ENCODE measurements at regions of chr2 and their contacts with region 1.

Region 1: DNA sequence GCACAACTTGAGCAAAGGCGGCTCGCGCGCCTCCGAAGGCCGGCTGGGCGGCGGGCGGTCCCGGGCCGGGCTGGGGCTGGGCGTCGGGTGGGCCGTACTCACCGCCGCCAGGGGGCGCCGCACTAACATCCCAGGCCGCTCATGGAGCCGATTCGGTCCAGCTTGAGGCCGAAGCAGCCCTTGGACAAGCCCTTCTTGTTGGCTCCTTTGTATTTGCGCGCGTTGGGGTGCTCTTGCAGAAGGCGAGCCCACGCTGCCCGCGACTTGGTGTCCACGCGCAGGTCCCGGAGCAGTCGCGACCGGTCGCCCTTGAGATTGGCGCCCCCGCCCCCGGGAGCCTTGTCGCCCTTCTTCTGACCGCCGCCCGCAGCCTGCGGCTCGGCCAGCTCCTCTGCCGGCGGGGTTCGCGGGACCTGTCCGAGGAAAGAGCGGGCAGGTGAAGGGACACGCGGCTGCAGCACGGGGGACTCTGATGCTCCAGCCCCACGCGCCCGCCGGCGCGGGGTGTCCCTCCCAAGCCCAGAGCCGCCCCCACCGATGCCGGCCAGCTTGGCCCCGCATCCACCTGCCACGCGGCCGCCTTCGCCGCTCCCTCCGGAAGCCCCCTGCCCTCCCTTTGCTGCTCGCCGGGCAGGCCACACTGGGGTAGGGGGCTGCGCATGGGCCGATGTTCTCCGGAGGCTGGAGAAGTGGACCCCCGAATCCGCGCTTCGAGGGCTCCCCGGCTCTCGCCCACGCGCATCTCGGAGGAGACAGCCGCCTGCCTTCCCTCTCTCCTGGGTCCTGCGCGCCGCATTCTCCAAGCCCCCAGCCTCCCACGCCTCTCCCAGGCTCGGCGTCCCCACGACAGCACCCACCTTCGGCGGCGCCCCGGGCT is 655 bp downstream of the NPPC start:
- DNase-seq: peak; percentile 82 to 91 (median 85)
- ATAC-seq: peak; percentile 75 to 90 (median 84)
- H3K4me3 ChIP-seq: peak overlapping the region; percentile 26 to 59 (median 50)
- H3K27ac ChIP-seq: peak overlapping the region in 1 of 12 donors; percentile 15
- H3K4me1 ChIP-seq: peaks cover 4 to 40% (median 20%) of the 10 kb centered on the region in 12 donors
- H3K27me3 ChIP-seq: peaks cover 9 to 79% (median 39%) of the 10 kb centered on the region in 9 donors
- CTCF ChIP-seq: peak; percentile 81 to 98 (median 91)
- POLR2A ChIP-seq: no peak

Region 2: GRCh38 chr2:231987124-231987727 is 61.7 kb after region 1 on chr2:
- intact Hi-C with region 1: loop called in 1 of 10 experiments (anchors 5 kb)
- DNase-seq: peak in 3 of 5 donors; percentile 23 to 32 (median 25)
- ATAC-seq: peak in 3 of 4 donors; percentile 20 to 80 (median 76)
- H3K4me3 ChIP-seq: no peak overlapping the region
- H3K27ac ChIP-seq: peak overlapping the region in 2 of 12 donors; percentile 12 to 21
- H3K4me1 ChIP-seq: peaks cover 0 to 28% (median 12%) of the 10 kb centered on the region in 12 donors
- H3K27me3 ChIP-seq: no peaks in the 10 kb centered on the region
- CTCF ChIP-seq: no peak
- POLR2A ChIP-seq: no peak

Region 3: DNA sequence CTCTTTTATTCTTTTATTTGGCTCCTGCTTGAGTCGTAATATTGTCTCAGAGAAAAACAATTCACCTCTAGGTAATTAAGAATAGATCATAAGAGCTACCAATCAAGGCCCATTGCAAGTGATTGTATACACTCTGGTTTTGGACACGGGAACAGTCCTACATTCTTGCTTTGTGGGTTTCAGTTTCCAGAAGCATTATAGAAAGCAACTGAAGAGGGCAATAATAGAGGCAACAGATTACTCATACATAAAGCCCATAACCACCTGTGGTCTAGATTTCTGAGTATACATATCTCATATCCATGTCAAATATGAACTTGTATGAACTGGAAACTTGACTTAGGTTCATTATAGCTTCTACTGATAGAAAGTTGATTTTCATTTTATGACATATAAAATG is 101.4 kb after region 1 on chr2:
- intact Hi-C with region 1: loop called in 1 of 10 experiments (anchors 5 kb)
- DNase-seq: no peak
- ATAC-seq: no peak
- H3K4me3 ChIP-seq: no peak overlapping the region
- H3K27ac ChIP-seq: no peak overlapping the region
- H3K4me1 ChIP-seq: peaks cover 0 to 24% (median 11%) of the 10 kb centered on the region in 12 donors
- H3K27me3 ChIP-seq: no peaks in the 10 kb centered on the region
- CTCF ChIP-seq: no peak
- POLR2A ChIP-seq: no peak

Region 4: GRCh38 chr2:232142049-232142448 is 216.5 kb after region 1 on chr2:
- intact Hi-C with region 1: loop called (anchors 1 to 5 kb)
- DNase-seq: peak in 4 of 5 donors; percentile 17 to 38 (median 28)
- ATAC-seq: peak in 3 of 4 donors; percentile 48 to 65 (median 53)
- H3K4me3 ChIP-seq: no peak overlapping the region
- H3K27ac ChIP-seq: no peak overlapping the region
- H3K4me1 ChIP-seq: peaks cover 0 to 14% (median 2%) of the 10 kb centered on the region in 12 donors
- H3K27me3 ChIP-seq: no peaks in the 10 kb centered on the region
- CTCF ChIP-seq: peak; percentile 36 to 75 (median 68)
- POLR2A ChIP-seq: no peak

Region 5: DNA sequence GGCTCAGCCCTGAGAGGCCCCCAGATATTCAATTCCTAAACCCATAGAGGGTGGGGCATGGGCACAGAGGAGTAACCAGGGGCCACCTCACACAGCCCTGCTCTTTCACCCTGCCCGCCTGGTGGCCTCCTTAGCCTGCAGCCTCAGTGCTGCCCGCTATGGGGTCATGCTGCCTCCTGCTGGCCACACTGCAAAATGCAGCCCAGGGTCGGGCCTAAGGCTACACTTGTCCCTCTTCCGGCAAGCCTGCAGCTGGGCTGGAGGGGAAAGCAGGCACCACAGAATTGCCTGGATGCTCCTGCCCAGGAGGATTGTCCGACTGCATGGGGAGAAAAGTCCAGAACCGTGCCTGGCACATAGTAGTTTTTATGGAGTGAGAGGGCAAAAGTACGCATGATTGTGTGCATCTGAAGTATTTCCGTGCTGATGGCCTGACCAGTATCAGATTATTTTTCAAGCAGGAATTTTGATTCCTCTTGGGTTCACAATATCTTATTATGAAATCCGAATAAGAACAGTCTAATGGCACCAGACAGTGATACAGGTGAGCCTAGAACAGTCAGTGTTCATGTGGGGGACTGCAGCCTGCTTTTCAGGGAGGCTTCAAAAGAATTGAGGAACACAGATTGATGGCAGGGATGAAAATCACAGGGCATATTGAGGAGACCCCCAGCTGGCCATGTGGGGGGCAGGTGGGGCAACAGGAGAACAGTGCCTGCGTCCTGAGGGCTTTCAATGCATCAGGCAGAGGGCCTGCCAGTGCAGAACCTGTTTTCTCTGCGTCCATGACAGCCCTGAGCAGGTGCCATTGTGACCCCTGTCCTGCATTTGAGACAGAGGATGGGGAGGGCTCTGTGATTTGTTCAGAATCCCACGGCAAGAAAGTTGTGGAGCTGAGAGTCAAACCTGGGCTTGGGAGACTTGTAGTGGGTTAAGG is 401.8 kb after region 1 on chr2:
- intact Hi-C with region 1: loop called (anchors 2 to 5 kb)
- DNase-seq: peak; percentile 52 to 87 (median 62)
- ATAC-seq: peak; percentile 16 to 69 (median 60)
- H3K4me3 ChIP-seq: no peak overlapping the region
- H3K27ac ChIP-seq: no peak overlapping the region
- H3K4me1 ChIP-seq: peaks cover 0 to 8% (median 0%) of the 10 kb centered on the region in 12 donors
- H3K27me3 ChIP-seq: no peaks in the 10 kb centered on the region
- CTCF ChIP-seq: peak; percentile 65 to 86 (median 72)
- POLR2A ChIP-seq: no peak

Region 6: GRCh38 chr2:232438951-232439757 is 513.6 kb after region 1 on chr2:
- intact Hi-C with region 1: loop called in 3 of 10 experiments (anchors 5 kb)
- DNase-seq: peak in 1 of 5 donors; percentile 60
- ATAC-seq: peak; percentile 30 to 58 (median 56)
- H3K4me3 ChIP-seq: no peak overlapping the region
- H3K27ac ChIP-seq: no peak overlapping the region
- H3K4me1 ChIP-seq: peaks cover 0 to 4% (median 0%) of the 10 kb centered on the region in 12 donors
- H3K27me3 ChIP-seq: peaks cover 0 to 6% (median 0%) of the 10 kb centered on the region in 9 donors
- CTCF ChIP-seq: peak; percentile 40 to 68 (median 54)
- POLR2A ChIP-seq: no peak

Region 7: GRCh38 chr2:232444409-232445148 is 519.0 kb after region 1 on chr2:
- intact Hi-C with region 1: loop called in 3 of 10 experiments (anchors 5 kb)
- DNase-seq: peak in 1 of 5 donors; percentile 55
- ATAC-seq: no peak
- H3K4me3 ChIP-seq: no peak overlapping the region
- H3K27ac ChIP-seq: no peak overlapping the region
- H3K4me1 ChIP-seq: peaks cover 0 to 4% (median 0%) of the 10 kb centered on the region in 12 donors
- H3K27me3 ChIP-seq: no peaks in the 10 kb centered on the region
- CTCF ChIP-seq: peak; percentile 14 to 66 (median 37)
- POLR2A ChIP-seq: no peak

Measured in heart left ventricle (tissue), 16 donors.